Panc1 (cell line): ENCODE measurements at regions of chr12 and their contacts with region 1.

Region 1: GRCh38 chr12:30622509-30622908 is 73.2 kb downstream of the IPO8 start:
- DNase-seq: no peak
- ATAC-seq: no peak
- H3K4me3 ChIP-seq: no peak overlapping the region
- H3K27ac ChIP-seq: no peak overlapping the region
- H3K4me1 ChIP-seq: no peaks in the 10 kb centered on the region
- H3K27me3 ChIP-seq: no peaks in the 10 kb centered on the region
- CTCF ChIP-seq: no peak

Region 2: DNA sequence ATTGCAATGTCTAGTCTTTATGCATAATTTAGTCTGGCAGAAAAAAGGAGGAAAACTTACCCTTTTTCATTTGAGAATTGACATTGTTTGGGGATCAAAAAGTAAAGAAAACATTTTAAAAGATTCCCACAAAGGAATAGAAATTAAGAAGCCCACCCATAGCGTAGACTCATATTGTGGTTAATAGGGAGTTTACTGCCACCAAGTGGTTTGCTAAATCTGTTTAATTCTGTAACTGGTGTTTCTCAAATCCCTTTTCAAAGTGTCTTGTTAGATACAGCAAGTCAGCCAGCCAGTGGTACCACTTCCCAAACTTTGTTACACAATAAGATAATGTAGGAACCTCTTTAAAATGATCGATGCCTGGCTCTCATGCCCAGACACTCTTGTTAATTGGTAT is 107.2 kb before region 1 on chr12:
- CTCF ChIA-PET with region 1: no interaction called
- POLR2A ChIA-PET with region 1: interaction called, 11 read pairs
- in situ Hi-C with region 1: no loop called
- intact Hi-C with region 1: no loop called
- DNase-seq: no peak
- ATAC-seq: no peak
- H3K4me3 ChIP-seq: no peak overlapping the region
- H3K27ac ChIP-seq: no peak overlapping the region
- H3K4me1 ChIP-seq: no peaks in the 10 kb centered on the region
- H3K27me3 ChIP-seq: peaks cover 4% of the 10 kb centered on the region; the same call in 1 of the 2 replicates
- CTCF ChIP-seq: peak; percentile 53; the same call in 1 of the 2 replicates

Region 3: DNA sequence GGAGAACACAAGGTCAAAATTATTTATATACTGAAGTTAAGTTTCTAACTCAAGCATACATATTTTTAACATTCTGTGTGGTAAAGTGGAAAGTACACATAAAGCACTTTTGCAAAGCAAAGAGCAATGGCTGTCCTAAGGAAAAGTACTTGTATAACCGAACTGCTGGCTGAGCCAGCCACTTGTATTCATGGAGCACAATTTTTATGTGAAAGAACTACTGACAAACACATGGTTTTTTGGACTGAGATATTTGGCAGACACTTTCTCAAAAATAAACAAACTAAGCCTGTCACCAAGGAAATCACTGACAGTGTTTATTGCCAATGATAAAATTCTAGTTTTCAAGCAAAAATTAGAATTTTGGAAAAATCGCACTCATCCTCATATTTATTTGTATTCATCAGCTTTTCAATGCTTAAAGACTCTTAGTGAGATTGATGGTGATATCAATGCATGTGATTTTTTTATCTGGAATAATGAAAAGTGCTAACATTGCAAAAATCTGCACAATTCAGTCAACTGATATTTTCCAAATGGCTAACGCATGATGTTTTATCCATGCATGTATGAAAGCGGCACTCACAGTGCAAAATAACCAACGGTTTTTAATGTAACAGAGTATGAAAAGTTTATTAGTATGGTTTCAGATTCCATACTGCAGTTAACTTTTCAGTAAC is 52.2 kb before region 1 on chr12:
- CTCF ChIA-PET with region 1: no interaction called
- POLR2A ChIA-PET with region 1: no interaction called
- in situ Hi-C with region 1: no loop called
- intact Hi-C with region 1: no loop called
- DNase-seq: no peak
- ATAC-seq: no peak
- H3K4me3 ChIP-seq: no peak overlapping the region
- H3K27ac ChIP-seq: no peak overlapping the region
- H3K4me1 ChIP-seq: no peaks in the 10 kb centered on the region
- H3K27me3 ChIP-seq: no peaks in the 10 kb centered on the region
- CTCF ChIP-seq: no peak

Region 4: DNA sequence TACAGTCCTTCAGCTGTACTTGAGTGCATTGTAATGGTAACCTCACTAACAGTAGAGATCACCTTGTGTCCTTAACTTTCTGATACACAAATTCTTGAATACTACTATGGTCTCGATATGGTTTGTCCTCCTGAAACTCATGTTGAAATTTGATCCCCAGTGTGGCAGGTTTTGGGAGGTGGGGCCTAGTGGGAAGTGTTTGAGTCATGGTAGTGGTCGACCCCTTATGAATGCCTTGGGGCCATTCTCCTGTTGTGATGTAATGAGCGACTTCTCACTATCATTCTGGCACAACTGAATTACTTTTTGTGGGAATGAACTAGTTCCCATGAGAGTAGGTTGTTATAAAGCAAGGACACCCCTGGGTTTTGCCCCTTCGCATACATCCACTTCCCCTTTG is 20.9 kb after region 1 on chr12:
- CTCF ChIA-PET with region 1: no interaction called
- POLR2A ChIA-PET with region 1: no interaction called
- in situ Hi-C with region 1: no loop called
- intact Hi-C with region 1: no loop called
- DNase-seq: no peak
- ATAC-seq: no peak
- H3K4me3 ChIP-seq: no peak overlapping the region
- H3K27ac ChIP-seq: no peak overlapping the region
- H3K4me1 ChIP-seq: no peaks in the 10 kb centered on the region
- H3K27me3 ChIP-seq: no peaks in the 10 kb centered on the region
- CTCF ChIP-seq: no peak